Thyroid gland (tissue), 4 donors: ENCODE measurements at regions of chr12 and their contacts with region 1.

Region 1: DNA sequence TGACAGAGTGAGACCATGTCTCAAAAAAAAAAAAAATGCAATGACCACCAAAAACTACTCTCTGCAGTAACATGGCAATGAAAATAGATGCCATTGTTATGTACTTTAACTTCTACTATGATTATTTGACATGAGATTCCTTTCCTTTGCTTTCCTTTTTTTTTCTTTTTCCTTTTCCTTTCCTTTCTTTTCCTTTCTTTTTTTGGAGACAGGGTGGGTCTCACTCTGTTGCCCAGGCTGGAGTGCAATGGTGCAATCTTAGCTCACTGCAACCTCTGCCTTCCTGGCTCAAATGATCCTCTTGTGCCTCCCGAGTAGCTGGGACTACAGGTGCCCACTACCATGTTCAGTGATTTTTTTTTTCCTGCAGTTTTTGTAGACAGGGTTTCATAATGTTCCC is 24.9 kb upstream of the ETFBKMT start:
- DNase-seq: no peak
- H3K4me3 ChIP-seq: no peak overlapping the region
- H3K27ac ChIP-seq: no peak overlapping the region
- H3K4me1 ChIP-seq: no peaks in the 10 kb centered on the region
- H3K27me3 ChIP-seq: no peaks in the 10 kb centered on the region
- CTCF ChIP-seq: no peak
- POLR2A ChIP-seq: no peak

Region 2: DNA sequence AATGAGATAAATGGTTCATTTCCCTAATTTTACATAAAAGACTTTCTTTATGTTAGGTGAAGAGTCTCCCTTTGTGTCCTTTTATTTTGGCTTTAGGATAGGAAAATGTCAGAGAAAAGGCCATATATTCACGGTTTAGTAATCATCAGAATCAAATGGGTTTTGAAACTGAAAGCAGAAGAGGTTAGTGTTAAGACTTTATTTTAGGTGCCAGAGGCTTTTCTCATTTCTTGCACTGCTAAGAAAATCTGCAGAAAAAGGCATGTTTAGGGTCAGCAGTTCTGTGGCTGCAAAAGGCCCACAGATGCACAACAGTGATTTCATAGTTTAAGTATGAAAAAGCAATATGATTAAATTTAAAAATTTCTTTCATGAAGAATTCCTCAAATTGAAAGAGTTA is 228.3 kb before region 1 on chr12:
- intact Hi-C with region 1: loop called (anchors 2 kb)
- DNase-seq: no peak
- H3K4me3 ChIP-seq: no peak overlapping the region
- H3K27ac ChIP-seq: no peak overlapping the region
- H3K4me1 ChIP-seq: no peaks in the 10 kb centered on the region
- H3K27me3 ChIP-seq: no peaks in the 10 kb centered on the region
- CTCF ChIP-seq: no peak
- POLR2A ChIP-seq: no peak

Region 3: DNA sequence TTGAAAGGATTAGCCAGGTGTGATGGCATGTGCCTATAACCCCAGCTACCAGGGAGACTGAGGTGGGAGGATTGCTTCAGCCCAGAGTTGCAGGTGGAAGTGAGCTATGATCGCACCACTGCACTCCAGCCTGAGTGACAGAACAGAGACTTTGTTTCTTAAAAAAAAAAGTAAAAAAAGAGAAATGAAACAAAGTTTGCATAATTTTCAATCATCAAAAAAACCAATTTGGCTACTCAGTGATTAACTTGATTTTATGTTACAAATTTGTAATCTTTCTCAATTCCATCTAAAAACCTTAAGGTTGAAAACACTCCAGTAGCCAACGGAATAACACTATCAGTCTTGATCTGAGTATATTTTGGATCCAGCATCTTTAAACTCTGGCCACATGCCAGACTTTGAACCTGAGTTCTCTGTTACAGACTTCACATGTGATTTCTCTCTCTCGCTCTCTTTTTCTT is 31.0 kb before region 1 on chr12:
- intact Hi-C with region 1: no loop called
- DNase-seq: peak in 1 of 2 donors; percentile 28
- H3K4me3 ChIP-seq: no peak overlapping the region
- H3K27ac ChIP-seq: no peak overlapping the region
- H3K4me1 ChIP-seq: no peaks in the 10 kb centered on the region
- H3K27me3 ChIP-seq: no peaks in the 10 kb centered on the region
- CTCF ChIP-seq: no peak
- POLR2A ChIP-seq: no peak